ENCODE measurements at regions of chr10 and their contacts with region 1.

Region 1: GRCh38 chr10:17257466-17258321 is 29.7 kb downstream of the VIM start:
- DNase-seq: no peak
- H3K4me3 ChIP-seq: no peak overlapping the region
- H3K27ac ChIP-seq: no peak overlapping the region
- H3K4me1 ChIP-seq: peaks cover 0 to 5% (median 0%) of the 10 kb centered on the region in 4 donors
- H3K27me3 ChIP-seq: no peaks in the 10 kb centered on the region
- CTCF ChIP-seq: peak; percentile 49 to 78 (median 64)
- EP300 ChIP-seq: no peak
- POLR2A ChIP-seq: no peak

Region 2: GRCh38 chr10:16828114-16828568 is 429.6 kb before region 1 on chr10:
- intact Hi-C with region 1: loop called (anchors 1 kb)
- DNase-seq: peak; percentile 71
- H3K4me3 ChIP-seq: no peak overlapping the region
- H3K27ac ChIP-seq: peak overlapping the region in 2 of 4 donors; percentile 32 to 52
- H3K4me1 ChIP-seq: peaks cover 0 to 7% (median 3%) of the 10 kb centered on the region in 4 donors
- H3K27me3 ChIP-seq: no peaks in the 10 kb centered on the region
- CTCF ChIP-seq: peak; percentile 32 to 66 (median 50)
- EP300 ChIP-seq: no peak
- POLR2A ChIP-seq: no peak

Region 3: GRCh38 chr10:16843252-16843870 is 414.3 kb before region 1 on chr10:
- intact Hi-C with region 1: loop called (anchors 1 kb)
- DNase-seq: no peak
- H3K4me3 ChIP-seq: no peak overlapping the region
- H3K27ac ChIP-seq: no peak overlapping the region
- H3K4me1 ChIP-seq: no peaks in the 10 kb centered on the region
- H3K27me3 ChIP-seq: no peaks in the 10 kb centered on the region
- CTCF ChIP-seq: peak in 3 of 4 experiments; percentile 28 to 61 (median 31)
- EP300 ChIP-seq: no peak
- POLR2A ChIP-seq: no peak

Region 4: GRCh38 chr10:17088118-17088806 is 169.4 kb before region 1 on chr10:
- intact Hi-C with region 1: no loop called
- DNase-seq: no peak
- H3K4me3 ChIP-seq: no peak overlapping the region
- H3K27ac ChIP-seq: no peak overlapping the region
- H3K4me1 ChIP-seq: no peaks in the 10 kb centered on the region
- H3K27me3 ChIP-seq: no peaks in the 10 kb centered on the region
- CTCF ChIP-seq: no peak
- EP300 ChIP-seq: no peak
- POLR2A ChIP-seq: no peak

Region 5: DNA sequence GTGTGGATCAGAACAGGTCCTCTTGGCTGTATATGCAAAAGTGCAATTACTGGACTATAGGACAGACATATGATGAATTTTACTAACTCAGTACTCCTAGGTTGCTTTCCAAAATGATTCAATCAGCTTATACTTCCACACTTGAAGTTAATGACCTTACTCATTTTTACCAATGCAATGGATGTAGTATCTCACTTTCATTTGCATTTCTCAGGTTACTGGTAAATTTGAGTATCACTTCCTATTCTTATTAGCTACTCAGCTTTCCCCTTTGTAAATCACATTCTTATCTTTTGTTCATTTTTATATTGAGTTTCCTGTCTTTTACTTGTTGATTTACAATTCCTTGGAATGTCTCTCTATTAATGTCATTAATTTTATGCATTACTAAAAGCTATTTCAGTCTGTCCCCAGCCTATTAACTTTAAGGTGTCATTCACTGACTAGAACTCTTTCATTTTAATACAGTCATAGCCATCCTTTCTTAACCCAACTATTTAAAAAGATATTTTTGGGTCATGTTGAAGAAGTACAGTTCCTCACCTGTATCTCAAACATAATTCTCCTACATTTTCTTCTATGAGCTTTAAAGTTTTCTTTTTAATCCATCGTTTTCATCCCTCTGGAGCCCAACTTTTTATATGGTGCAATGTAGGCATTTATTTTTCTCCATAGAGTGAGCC is 58.9 kb after region 1 on chr10:
- intact Hi-C with region 1: no loop called
- DNase-seq: no peak
- H3K4me3 ChIP-seq: no peak overlapping the region
- H3K27ac ChIP-seq: no peak overlapping the region
- H3K4me1 ChIP-seq: no peaks in the 10 kb centered on the region
- H3K27me3 ChIP-seq: no peaks in the 10 kb centered on the region
- CTCF ChIP-seq: no peak
- EP300 ChIP-seq: no peak
- POLR2A ChIP-seq: no peak

Region 6: DNA sequence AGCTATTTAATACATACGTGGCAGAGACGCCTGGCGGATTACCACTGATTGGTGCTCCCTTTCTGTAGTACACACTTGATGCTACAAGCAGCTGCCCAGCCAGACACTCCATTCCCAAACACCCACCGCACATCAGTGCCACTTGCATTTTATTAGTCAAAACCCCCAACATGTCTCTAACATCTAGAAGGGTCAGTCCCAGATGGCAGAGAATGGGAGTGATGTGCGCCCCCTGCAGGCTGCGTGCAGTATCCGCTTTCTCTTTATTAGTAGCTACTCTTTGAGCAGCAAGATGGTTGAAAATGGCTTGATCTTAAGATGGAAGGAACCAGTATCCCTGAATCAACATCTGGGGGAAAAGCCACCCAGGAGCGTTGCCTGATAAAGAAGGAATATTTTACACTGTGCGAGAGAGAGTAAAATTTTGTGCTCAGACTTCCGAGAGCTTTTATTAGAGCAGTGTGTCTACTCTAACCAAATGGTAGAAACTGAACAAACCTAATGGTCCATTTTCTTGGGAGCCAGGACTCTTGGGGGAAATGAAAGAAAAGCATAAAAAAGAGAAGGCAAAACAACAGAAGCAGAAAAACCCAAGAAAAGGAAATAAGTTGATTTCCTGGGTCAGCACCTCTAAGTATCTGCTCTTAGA is 118.4 kb after region 1 on chr10:
- intact Hi-C with region 1: no loop called
- DNase-seq: no peak
- H3K4me3 ChIP-seq: no peak overlapping the region
- H3K27ac ChIP-seq: no peak overlapping the region
- H3K4me1 ChIP-seq: no peaks in the 10 kb centered on the region
- H3K27me3 ChIP-seq: no peaks in the 10 kb centered on the region
- CTCF ChIP-seq: no peak
- EP300 ChIP-seq: no peak
- POLR2A ChIP-seq: no peak

Region 7: GRCh38 chr10:18204039-18204835 is 946.5 kb after region 1 on chr10:
- intact Hi-C with region 1: no loop called
- DNase-seq: no peak
- H3K4me3 ChIP-seq: peak overlapping the region in 2 of 4 donors; percentile 20 to 29
- H3K27ac ChIP-seq: peak overlapping the region; percentile 75 to 88 (median 82)
- H3K4me1 ChIP-seq: peaks cover 0 to 52% (median 37%) of the 10 kb centered on the region in 4 donors
- H3K27me3 ChIP-seq: no peaks in the 10 kb centered on the region
- CTCF ChIP-seq: no peak
- EP300 ChIP-seq: no peak
- POLR2A ChIP-seq: no peak

Measured in sigmoid colon (tissue), 7 donors.